Activated T-helper 1 cell treated with anti-CD3 and anti-CD28 coated beads, Interleukin-12 subunit alpha, Interleukin-12 subunit beta, Interleukin-2, Interleukin-4 antibody, amounts not matched to agents 30 ng/mL and 10 ng/mL and 1 ng/mL, durations not matched to agents 14 hours and 24 hours and 36 hours (primary cell): ENCODE measurements at regions of chr10 and their contacts with region 1.

Region 1: GRCh38 chr10:69123747-69124562 is at the start of gene VPS26A:
- DNase-seq: peak; percentile 99
- H3K4me3 Mint-ChIP-seq: peak within 1 kb of the TSS; percentile 87
- H3K27ac Mint-ChIP-seq: peak within 1 kb of the TSS; percentile 88
- H3K4me1 Mint-ChIP-seq: peaks cover 21% of the 10 kb centered on the region
- H3K27me3 Mint-ChIP-seq: no peaks in the 10 kb centered on the region
- total RNA-seq, gene VPS26A: 24.7 and 24.8 TPM in 2 replicates

Region 2: DNA sequence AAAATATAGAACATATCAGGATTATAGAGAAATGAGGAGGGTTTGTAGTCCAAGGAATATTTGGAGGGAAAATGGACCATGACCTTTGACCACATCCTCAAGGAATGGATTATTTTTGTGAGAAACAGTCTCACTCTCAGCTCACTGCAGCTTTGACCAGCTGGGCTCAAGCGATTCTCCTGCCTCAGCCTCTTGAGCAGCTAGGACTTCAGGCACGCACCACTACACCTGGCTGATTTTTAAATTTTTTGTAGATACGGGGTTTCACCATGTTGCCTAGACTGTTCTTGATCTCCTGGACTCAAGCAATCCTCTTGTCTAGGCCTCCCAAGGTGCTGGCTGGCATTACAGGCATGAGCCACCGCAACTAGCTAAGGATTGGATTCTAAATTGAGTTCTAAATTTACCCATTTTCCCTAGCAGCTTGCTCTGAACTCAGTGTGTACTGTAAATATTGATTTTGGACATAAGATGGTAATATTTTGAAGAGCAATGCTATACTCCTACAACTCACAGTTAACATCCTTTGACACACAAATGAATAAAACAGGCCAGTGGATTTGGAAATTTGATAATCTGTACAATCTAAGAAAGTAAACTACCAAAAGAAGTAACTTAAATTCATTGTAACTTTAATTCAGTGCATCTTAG is 490.0 kb before region 1 on chr10:
- intact Hi-C with region 1: no loop called
- DNase-seq: no peak
- H3K4me3 Mint-ChIP-seq: no peak overlapping the region
- H3K27ac Mint-ChIP-seq: no peak overlapping the region
- H3K4me1 Mint-ChIP-seq: no peaks in the 10 kb centered on the region
- H3K27me3 Mint-ChIP-seq: peaks cover 3% of the 10 kb centered on the region

Region 3: GRCh38 chr10:68988530-68989316 is 135.2 kb before region 1 on chr10 and contains the start of gene KIFBP:
- intact Hi-C with region 1: loop called (anchors 1 kb)
- DNase-seq: peak; percentile 84
- H3K4me3 Mint-ChIP-seq: peak within 1 kb of the TSS; percentile 93
- H3K27ac Mint-ChIP-seq: peak within 1 kb of the TSS; percentile 87
- H3K4me1 Mint-ChIP-seq: peaks cover 34% of the 10 kb centered on the region
- H3K27me3 Mint-ChIP-seq: no peaks in the 10 kb centered on the region
- total RNA-seq, gene KIFBP: 16.4 and 16.9 TPM in 2 replicates

Region 4: GRCh38 chr10:69004821-69005220 is 119.1 kb before region 1 on chr10:
- intact Hi-C with region 1: loop called (anchors 1 kb)
- DNase-seq: no peak
- H3K4me3 Mint-ChIP-seq: no peak overlapping the region
- H3K27ac Mint-ChIP-seq: no peak overlapping the region
- H3K4me1 Mint-ChIP-seq: peaks cover 18% of the 10 kb centered on the region
- H3K27me3 Mint-ChIP-seq: no peaks in the 10 kb centered on the region

Region 5: DNA sequence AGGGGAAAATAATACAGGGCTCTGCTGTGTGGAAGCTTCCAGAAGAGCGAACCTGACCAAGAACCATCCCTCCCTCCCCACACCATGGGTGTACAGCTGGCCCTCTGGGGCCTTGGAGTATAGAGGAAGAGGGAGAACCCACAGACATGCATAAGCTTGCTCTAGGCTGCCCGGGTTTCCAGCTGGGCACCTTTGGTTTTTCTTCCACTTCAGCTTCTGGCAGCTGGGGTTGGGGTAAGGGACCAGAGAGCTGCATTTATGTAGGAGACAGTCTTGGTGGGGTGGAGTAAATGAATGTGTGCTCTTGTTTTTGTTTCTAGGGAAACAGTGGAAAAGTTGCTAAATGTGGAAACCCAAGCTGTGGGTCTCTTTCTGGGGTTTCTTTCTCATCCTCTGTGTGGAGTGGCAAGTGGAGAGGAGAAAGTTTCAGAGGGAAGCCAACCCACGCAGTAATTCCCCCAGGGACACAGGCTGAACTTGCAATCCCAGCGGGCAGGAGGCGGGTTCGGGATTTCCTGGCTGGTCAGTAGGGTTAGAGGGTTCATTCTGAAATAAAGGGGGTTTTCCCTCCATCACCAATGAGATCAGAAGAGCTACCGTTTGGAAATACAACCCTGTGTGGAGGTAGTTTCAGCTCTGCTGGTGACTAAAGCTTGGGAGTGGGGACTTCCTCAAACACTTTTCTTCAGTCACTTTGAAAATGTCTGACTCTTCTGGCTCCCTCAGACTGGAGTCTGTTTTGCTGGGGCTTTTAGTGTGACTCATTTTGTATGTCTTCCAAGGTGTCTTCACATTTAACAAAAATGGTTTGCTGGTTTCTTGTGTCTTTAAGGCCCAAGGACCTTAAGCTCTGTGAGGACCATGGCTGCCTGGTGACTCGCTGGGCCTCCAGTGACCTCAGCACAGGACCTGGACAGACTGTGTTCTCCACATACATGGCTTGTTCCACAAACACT is 58.3 kb before region 1 on chr10:
- intact Hi-C with region 1: loop called (anchors 1 kb)
- DNase-seq: peak; percentile 39
- H3K4me3 Mint-ChIP-seq: peak overlapping the region; percentile 62
- H3K27ac Mint-ChIP-seq: peak overlapping the region; percentile 99
- H3K4me1 Mint-ChIP-seq: peaks cover 51% of the 10 kb centered on the region
- H3K27me3 Mint-ChIP-seq: no peaks in the 10 kb centered on the region

Region 6: DNA sequence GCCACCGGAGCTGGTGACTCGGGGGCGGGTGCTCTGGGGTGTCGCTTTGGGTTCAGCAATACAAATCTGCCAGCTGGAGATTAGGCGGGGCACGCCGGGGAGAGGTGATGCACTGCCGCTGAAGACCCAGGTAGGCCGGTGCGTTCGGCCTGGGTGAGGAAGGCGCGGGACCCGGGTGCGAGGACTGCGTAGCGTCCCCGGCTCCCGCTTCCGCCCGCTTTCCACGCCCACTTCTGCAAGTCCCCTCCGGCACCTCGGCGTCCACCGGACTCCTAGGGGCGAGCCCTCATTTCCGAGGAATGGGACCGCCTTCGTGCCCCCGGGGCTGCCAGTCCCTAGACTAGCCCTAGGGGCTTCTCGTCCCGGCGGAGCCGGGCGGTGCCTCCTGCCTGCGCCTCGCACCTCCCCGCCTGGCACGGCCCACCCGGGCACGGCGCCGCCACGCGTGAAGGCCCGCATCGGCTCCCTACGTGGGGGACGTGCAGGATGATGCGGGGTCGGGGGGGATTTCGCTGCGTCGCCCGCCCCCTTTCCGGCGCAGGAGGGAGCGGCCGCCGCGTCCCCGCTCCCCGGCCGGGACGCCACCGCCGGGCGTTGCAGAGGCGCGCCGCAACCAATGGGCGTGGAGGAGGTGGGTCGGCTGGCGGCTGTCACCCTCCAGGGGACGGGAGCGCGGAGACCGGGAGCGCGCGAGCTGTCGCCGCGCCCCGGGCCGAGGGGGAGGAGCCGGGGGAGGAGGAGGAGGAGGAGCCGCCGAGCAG is 194.3 kb after region 1 on chr10:
- intact Hi-C with region 1: loop called (anchors 2 kb)
- DNase-seq: peak; percentile 91
- H3K4me3 Mint-ChIP-seq: peak overlapping the region; percentile 99
- H3K27ac Mint-ChIP-seq: peak overlapping the region; percentile 98
- H3K4me1 Mint-ChIP-seq: peaks cover 50% of the 10 kb centered on the region
- H3K27me3 Mint-ChIP-seq: peaks cover 8% of the 10 kb centered on the region